Activated CD4-positive, alpha-beta memory T cell treated with anti-CD3 and anti-CD28 coated beads, Interleukin-2, amount 10 ng/mL, durations not matched to agents 7 days and 5 days (primary cell): ENCODE measurements at regions of chr6 and their contacts with region 1.

Region 1: DNA sequence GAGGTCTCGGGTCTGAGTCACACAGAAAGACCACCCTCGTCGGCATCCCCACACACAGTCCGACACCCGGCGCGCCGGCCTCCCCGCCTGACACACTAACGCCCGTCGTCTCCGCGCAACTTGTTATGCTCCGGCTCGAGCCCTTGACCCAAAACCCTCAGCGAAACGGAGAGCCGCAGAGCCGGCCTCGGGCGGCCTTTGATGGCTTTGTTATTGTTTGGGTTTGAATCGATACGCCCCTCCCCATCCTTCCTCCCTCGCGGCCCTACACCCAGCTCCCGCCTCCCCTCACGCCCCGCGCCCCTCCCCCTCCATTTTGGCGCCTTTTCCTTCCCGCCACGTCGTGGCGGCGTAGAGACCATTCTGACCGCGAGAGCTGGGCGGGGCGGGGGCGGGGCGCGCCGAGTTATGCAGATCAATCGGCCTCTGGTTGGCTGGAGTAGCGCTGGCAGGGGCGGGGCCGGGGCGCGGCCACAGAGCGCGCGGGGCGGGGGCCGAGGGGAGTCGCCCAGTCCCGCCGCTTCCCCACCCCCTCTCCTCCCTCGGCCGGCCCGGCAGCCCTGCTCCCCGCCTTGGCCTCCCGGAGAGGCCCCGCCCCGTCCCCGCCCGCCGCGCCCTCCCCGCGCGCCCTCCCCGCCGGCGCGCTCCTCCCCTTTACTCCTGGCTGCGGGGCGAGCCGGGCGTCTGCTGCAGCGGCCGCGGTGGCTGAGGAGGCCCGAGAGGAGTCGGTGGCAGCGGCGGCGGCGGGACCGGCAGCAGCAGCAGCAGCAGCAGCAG is at the start of gene PIM1:
- DNase-seq: peak; percentile 100
- H3K4me3 Mint-ChIP-seq: peak within 1 kb of the TSS; percentile 94
- H3K27ac Mint-ChIP-seq: peak within 1 kb of the TSS; percentile 98
- H3K4me1 Mint-ChIP-seq: peaks cover 36% of the 10 kb centered on the region
- H3K27me3 Mint-ChIP-seq: peaks cover 1% of the 10 kb centered on the region
- total RNA-seq, gene PIM1: 497 to 505 TPM

Region 2: GRCh38 chr6:37029249-37029971 is 140.3 kb before region 1 on chr6:
- CTCF ChIA-PET with region 1: interaction called, 275 read pairs
- POLR2A ChIA-PET with region 1: interaction called, 557 read pairs
- DNase-seq: peak; percentile 63
- H3K4me3 Mint-ChIP-seq: no peak overlapping the region
- H3K27ac Mint-ChIP-seq: peak overlapping the region; percentile 86
- H3K4me1 Mint-ChIP-seq: peaks cover 75% of the 10 kb centered on the region
- H3K27me3 Mint-ChIP-seq: no peaks in the 10 kb centered on the region

Region 3: GRCh38 chr6:37102279-37103168 is 67.2 kb before region 1 on chr6:
- CTCF ChIA-PET with region 1: interaction called, 7 read pairs
- POLR2A ChIA-PET with region 1: interaction called, 36 read pairs
- DNase-seq: peak; percentile 71
- H3K4me3 Mint-ChIP-seq: peak overlapping the region; percentile 58
- H3K27ac Mint-ChIP-seq: peak overlapping the region; percentile 59
- H3K4me1 Mint-ChIP-seq: peaks cover 54% of the 10 kb centered on the region
- H3K27me3 Mint-ChIP-seq: no peaks in the 10 kb centered on the region

Region 4: DNA sequence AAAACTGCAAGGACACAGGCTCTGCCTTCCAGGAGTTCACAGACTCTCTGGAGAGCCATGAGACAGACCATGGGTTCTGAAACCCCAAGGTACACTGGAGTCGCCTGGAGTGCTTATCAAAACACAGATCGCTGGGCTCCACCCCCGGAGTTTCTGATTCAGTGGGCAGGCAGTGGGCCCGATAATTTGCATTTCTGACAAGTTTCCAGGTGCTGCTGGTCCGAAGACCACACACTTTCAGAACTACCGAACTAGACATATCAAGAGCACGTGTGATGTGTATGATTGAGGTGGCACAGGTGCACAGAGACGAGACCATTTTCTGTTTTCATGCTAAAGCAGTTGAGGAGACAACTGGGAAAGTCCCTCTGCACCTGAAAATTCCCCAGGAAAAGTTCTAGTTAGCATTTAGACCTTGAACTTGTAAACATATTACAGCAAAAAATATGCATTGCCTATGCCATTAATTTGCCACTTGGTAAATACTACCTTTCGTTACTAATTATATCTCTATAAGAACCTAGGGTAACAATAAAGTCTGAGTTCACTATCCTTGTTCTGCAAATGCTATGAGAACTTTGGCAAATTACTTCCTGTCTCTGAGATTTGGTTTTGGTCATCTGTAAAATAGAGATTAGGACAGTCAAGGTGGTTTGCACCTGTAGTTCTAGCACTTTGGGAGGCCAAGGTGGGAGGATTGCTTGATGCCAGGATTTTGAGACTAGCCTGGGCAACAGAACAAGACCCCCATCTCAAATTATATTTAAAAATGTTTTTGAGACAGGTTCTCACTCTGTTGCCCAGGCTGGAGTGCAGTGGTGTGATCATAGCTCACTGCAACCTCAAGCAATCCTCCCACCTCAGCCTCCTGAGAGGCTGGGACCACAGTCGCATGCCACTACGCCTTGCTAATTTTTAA is 14.0 kb before region 1 on chr6:
- CTCF ChIA-PET with region 1: interaction called, 4 read pairs
- POLR2A ChIA-PET with region 1: interaction called, 20 read pairs
- DNase-seq: peak; percentile 59
- H3K4me3 Mint-ChIP-seq: peak overlapping the region; percentile 9
- H3K27ac Mint-ChIP-seq: peak overlapping the region; percentile 38
- H3K4me1 Mint-ChIP-seq: peaks cover 26% of the 10 kb centered on the region
- H3K27me3 Mint-ChIP-seq: no peaks in the 10 kb centered on the region

Region 5: GRCh38 chr6:37207903-37208456 is 38.3 kb after region 1 on chr6:
- CTCF ChIA-PET with region 1: interaction called, 143 read pairs
- POLR2A ChIA-PET with region 1: interaction called, 525 read pairs
- DNase-seq: peak; percentile 94
- H3K4me3 Mint-ChIP-seq: peak overlapping the region; percentile 17
- H3K27ac Mint-ChIP-seq: peak overlapping the region; percentile 78
- H3K4me1 Mint-ChIP-seq: peaks cover 67% of the 10 kb centered on the region
- H3K27me3 Mint-ChIP-seq: no peaks in the 10 kb centered on the region

Region 6: GRCh38 chr6:37283671-37284151 is 114.0 kb after region 1 on chr6:
- CTCF ChIA-PET with region 1: no interaction called
- POLR2A ChIA-PET with region 1: no interaction called
- DNase-seq: no peak
- H3K4me3 Mint-ChIP-seq: no peak overlapping the region
- H3K27ac Mint-ChIP-seq: no peak overlapping the region
- H3K4me1 Mint-ChIP-seq: peaks cover 49% of the 10 kb centered on the region
- H3K27me3 Mint-ChIP-seq: no peaks in the 10 kb centered on the region